Psoas muscle (tissue), 8 donors: ENCODE measurements at regions of chr19 and their contacts with region 1.

Region 1: DNA sequence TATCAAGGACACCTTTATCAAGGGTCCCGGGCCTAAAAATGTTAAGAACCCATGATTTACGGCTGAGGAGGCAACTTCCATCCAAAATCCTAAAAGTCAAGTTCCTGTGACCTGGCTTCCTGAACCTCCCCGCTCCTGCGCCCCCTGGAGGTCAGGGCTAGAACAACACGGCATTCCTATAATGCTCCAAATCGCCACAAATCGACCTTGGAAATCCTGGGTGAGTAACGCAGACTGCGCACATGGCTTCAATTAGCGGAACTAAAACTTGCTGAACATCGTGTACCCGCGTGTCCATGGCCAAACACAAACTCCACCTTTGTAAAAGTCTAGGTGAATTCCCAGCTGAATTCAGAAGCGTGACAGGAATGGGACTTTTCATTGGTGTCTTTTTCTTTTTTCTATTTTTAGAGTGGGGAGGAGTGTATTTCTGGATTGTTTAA is 4.3 kb upstream of the C5AR1 start:
- DNase-seq: peak; percentile 76 to 78
- ATAC-seq: peak in 3 of 4 donors; percentile 67 to 80 (median 72)
- H3K4me3 ChIP-seq: no peak overlapping the region
- H3K27ac ChIP-seq: no peak overlapping the region
- H3K4me1 ChIP-seq: no peaks in the 10 kb centered on the region
- H3K27me3 ChIP-seq: peaks cover 0 to 8% (median 0%) of the 10 kb centered on the region in 3 donors
- CTCF ChIP-seq: peak; percentile 87

Region 2: DNA sequence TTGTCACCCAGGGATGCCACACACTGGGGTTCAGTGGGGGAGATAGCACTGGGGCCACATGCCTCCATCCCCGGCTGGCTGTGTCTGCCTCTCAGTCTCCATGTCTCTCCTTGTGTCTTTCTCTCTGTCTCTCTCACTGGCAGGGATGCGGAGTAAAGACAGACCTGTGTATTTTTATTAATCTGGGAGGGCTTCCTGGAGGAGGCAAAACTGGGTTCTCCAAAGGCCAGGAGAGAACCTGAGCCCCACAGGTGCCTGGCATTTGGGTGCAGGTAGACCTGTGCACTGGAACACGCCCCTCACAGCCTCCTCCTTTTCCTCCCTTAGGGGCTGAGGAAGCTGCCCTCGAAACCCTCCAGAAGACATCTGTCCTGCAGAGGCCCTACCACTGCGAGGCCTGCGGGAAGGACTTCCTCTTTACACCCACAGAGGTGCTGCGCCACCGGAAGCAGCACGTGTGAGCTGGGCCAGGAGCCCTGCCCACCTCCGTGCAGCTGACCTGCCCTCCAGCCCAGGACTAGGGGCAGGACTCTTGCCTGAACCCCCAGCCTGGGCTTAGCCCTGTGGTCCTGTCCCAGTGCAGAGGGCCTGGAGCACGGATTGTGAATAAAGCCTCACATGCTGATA is 76.4 kb after region 1 on chr19:
- intact Hi-C with region 1: loop called in 1 of 2 experiments (anchors 10 kb)
- DNase-seq: no peak
- ATAC-seq: no peak
- H3K4me3 ChIP-seq: no peak overlapping the region
- H3K27ac ChIP-seq: no peak overlapping the region
- H3K4me1 ChIP-seq: peaks cover 8% of the 10 kb centered on the region
- H3K27me3 ChIP-seq: peaks cover 0 to 2% (median 0%) of the 10 kb centered on the region in 3 donors
- CTCF ChIP-seq: no peak